CD14-positive monocyte (primary cell): ENCODE measurements at regions of chr20 and their contacts with region 1.

Region 1: GRCh38 chr20:20734475-20734948 is 22.1 kb upstream of the RALGAPA2 start:
- DNase-seq: peak; percentile 85 to 97 (median 87)
- H3K4me3 ChIP-seq: no peak overlapping the region
- H3K4me3 Mint-ChIP-seq: peak overlapping the region in 1 of 2 donors; percentile 47
- H3K27ac ChIP-seq: peak overlapping the region; percentile 83 to 89
- H3K27ac Mint-ChIP-seq: peak overlapping the region; percentile 89 to 97 (median 95)
- H3K4me1 ChIP-seq: peaks cover 44 to 53% of the 10 kb centered on the region in 2 donors
- H3K4me1 Mint-ChIP-seq: peaks cover 51% of the 10 kb centered on the region
- H3K27me3 ChIP-seq: no peaks in the 10 kb centered on the region
- H3K27me3 Mint-ChIP-seq: no peaks in the 10 kb centered on the region
- CTCF ChIP-seq: no peak

Region 2: DNA sequence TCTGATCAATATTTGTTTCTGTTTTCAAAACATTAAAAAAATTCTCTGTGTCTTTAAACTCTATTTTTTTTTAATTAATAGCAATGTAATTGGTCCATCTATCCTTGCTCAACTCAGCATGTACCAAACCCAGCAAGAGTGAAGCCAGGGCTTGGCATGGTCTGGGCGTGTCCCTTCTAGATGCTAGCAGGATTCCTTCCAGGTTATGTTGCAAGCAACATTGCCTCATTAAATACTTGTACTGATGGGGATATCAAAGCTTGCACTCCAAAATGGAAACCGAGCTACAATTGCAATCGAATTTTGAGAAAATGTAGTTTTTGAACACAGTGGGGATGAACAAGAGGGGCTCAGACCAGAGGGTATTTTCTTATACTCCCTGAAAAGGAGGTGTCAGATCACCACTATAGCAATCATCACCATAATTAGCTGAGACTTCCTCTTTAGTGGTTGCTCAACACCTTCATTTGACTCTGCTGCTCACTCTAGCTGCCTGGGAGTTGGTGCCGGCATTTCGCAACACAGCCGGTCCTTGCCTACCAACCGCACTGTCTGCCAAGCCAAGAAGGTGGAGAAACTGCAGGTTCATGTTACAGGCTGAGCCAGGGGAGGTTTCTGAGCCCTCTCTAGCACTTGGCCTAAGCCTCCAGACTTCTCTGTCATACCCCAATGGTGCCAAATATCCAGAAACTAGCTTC is 45.8 kb after region 1 on chr20:
- intact Hi-C with region 1: loop called (anchors 5 kb)
- DNase-seq: peak; percentile 91 to 97 (median 95)
- H3K4me3 ChIP-seq: peak overlapping the region in 1 of 3 experiments; percentile 36
- H3K4me3 Mint-ChIP-seq: peak overlapping the region in 1 of 2 donors; percentile 62
- H3K27ac ChIP-seq: peak overlapping the region; percentile 53 to 82
- H3K27ac Mint-ChIP-seq: peak overlapping the region; percentile 89 to 98 (median 97)
- H3K4me1 ChIP-seq: peaks cover 41 to 55% of the 10 kb centered on the region in 2 donors
- H3K4me1 Mint-ChIP-seq: peaks cover 41% of the 10 kb centered on the region
- H3K27me3 ChIP-seq: no peaks in the 10 kb centered on the region
- H3K27me3 Mint-ChIP-seq: no peaks in the 10 kb centered on the region
- CTCF ChIP-seq: no peak

Region 3: GRCh38 chr20:20824924-20825584 is 90.5 kb after region 1 on chr20:
- intact Hi-C with region 1: no loop called
- DNase-seq: peak; percentile 54 to 75 (median 56)
- H3K4me3 ChIP-seq: peak overlapping the region in 1 of 3 experiments; percentile 38
- H3K4me3 Mint-ChIP-seq: peak overlapping the region; percentile 60 to 84
- H3K27ac ChIP-seq: no peak overlapping the region
- H3K27ac Mint-ChIP-seq: peak overlapping the region in 2 of 7 donors; percentile 28 to 64
- H3K4me1 ChIP-seq: peaks cover 36 to 37% of the 10 kb centered on the region in 2 donors
- H3K4me1 Mint-ChIP-seq: peaks cover 37% of the 10 kb centered on the region
- H3K27me3 ChIP-seq: peaks cover 0 to 11% of the 10 kb centered on the region in 2 donors
- H3K27me3 Mint-ChIP-seq: peaks cover 23 to 41% (median 39%) of the 10 kb centered on the region in 3 donors
- CTCF ChIP-seq: peak; percentile 87